MCF 10A (cell line): ENCODE measurements at regions of chr13 and their contacts with region 1.

Region 1: DNA sequence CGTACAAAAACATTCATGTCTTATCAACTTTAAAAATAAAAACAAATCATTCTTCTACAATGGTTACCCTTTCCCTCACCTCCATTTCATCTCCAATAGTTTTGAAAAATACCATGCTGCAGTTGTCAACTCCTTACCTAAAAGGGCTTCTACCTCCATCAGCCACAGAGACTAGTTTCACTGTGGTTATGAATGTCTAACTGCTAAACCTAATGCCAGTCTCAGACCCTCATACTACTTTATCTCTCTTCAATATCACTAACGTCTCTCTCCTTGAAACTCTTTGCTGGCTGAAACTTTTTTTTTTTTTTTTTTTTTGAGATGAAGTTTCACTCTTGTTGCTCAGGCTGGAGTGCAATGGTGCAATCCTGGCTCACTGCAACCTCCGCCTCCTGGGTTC is 27.1 kb downstream of the LNX2 start:
- DNase-seq: no peak
- H3K4me3 Mint-ChIP-seq: no peak overlapping the region
- H3K27ac Mint-ChIP-seq: no peak overlapping the region
- H3K4me1 Mint-ChIP-seq: no peaks in the 10 kb centered on the region
- H3K27me3 Mint-ChIP-seq: no peaks in the 10 kb centered on the region
- CTCF ChIP-seq: no peak

Region 2: DNA sequence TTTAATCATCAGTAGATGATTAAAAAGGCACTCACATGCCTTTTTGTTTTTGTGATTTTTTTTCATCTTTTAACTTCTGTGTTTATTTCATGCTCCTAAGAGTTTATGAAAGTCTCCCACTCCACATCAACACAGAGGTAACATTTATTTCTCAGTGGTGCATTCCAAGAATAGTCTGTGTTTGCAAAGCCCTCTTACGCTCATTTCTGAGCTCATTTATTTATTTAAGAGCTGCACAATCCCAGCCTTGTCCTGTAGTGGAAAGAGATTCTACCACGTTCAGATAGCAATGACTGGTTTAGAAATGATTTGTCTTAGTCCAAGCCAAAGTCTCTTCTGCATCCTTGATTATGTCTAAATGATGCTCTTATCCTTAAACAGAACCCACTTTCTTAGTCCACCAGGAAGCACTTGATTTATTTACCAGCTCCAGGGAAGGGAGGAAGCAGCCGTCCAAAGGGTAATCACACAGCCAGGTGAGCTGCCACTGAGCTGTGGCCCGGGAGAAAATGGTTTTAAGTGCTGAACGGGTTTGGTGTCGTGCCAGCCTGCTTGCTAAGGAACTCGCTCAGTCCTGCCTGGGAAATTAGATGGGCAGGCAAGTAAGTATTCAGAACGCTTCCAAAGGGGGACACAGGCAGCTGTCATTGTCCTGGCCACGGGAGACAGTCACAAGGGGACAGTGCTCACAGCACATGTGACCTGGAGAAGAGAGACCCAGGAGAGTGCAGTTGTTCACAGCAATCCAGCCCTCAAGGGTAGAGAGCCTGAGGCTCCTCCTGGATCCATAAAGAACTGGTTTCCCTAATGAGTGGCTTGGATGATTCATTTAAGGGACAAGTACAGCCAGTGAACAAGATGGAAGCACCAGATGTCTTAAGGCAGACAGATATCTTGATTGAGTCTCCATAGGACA is 1167.6 kb before region 1 on chr13:
- CTCF ChIA-PET with region 1: no interaction called
- POLR2A ChIA-PET with region 1: no interaction called
- intact Hi-C with region 1: no loop called
- DNase-seq: no peak
- H3K4me3 Mint-ChIP-seq: no peak overlapping the region
- H3K27ac Mint-ChIP-seq: no peak overlapping the region
- H3K4me1 Mint-ChIP-seq: no peaks in the 10 kb centered on the region
- H3K27me3 Mint-ChIP-seq: no peaks in the 10 kb centered on the region
- CTCF ChIP-seq: no peak

Region 3: GRCh38 chr13:27607125-27607524 is 13.9 kb after region 1 on chr13:
- CTCF ChIA-PET with region 1: interaction called, 3 read pairs
- POLR2A ChIA-PET with region 1: interaction called, 11 read pairs
- intact Hi-C with region 1: no loop called
- DNase-seq: peak; percentile 65
- H3K4me3 Mint-ChIP-seq: peak overlapping the region; percentile 22
- H3K27ac Mint-ChIP-seq: peak overlapping the region; percentile 78
- H3K4me1 Mint-ChIP-seq: peaks cover 19% of the 10 kb centered on the region
- H3K27me3 Mint-ChIP-seq: no peaks in the 10 kb centered on the region
- CTCF ChIP-seq: no peak